Dendritic cell treated with granulocyte-macrophage colony-stimulating factor and Interleukin-4, amounts not matched to agents 40 ng/mL and 50 ng/mL, for 4 days (primary cell): ENCODE measurements at regions of chrX and their contacts with region 1.

Region 1: DNA sequence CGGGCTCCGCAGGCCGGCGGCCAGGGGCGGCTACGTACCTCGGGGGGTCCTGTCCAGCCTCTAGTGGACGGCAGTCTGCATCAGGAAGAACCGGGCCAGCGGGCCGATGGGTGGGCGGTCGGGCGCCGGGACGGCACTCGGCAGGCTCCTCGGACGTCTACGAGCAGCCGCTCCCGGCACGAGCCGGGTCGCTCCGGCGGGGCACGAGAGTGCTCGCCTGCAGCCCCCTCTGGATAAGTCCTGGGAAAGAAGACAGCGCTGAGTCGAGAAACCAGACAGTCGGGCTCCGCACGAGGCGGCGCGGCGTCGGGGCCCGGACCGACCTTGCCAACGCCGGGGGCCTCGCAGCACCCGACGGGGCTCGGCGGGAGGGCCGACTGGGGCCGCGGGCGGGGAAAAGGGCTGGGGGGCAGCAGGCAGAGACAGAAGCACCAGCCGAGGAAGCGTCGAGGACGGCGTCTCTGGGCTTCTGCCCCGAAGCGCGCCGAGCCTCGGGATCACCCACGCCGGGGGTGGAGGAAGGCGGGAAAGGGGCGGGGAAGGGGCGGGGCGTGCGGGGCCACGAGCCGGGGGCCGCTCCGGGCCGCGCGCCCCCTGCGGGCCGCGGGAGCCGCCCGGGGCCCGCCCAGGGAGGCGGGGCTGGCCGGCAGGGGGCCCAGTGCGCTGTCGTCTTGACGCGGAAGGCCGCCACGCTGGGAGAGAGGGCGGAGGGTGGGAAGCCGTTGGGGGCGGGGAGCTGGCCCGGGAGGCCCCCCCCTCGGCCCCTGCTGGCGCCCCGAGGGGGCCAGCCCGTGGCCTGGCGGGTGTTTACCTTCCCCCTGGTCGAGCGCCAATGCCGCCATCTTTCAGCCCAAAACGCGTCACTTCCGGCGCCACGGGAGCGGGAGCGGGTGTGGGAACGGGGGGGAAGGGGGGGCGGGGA is 1.9 kb downstream of the KLHL15 start:
- H3K4me3 Mint-ChIP-seq: peak overlapping the region; percentile 74
- H3K27ac Mint-ChIP-seq: peak overlapping the region; percentile 83
- H3K4me1 Mint-ChIP-seq: peaks cover 8% of the 10 kb centered on the region
- H3K27me3 Mint-ChIP-seq: peaks cover 2% of the 10 kb centered on the region

Region 2: DNA sequence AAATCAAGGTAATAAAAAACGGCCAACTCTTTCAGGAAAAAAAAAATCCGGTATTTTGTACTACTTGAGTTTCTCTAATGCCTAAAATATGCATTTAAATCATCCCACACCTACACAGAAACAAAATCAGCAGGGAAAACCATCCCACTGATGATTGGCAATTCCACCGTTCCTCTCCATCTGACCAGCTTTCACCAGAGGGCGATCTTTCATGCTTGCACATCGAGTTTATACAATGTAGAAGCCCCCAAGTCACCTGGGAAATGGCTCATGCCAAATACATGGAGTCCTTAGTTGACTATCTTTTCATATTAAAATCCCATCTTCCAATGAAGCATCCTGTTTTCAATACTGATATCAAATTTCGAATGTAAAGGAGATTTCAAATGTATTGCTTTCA is 621.2 kb before region 1 on chrX:
- intact Hi-C with region 1: no loop called
- H3K4me3 Mint-ChIP-seq: no peak overlapping the region
- H3K27ac Mint-ChIP-seq: no peak overlapping the region
- H3K4me1 Mint-ChIP-seq: no peaks in the 10 kb centered on the region
- H3K27me3 Mint-ChIP-seq: no peaks in the 10 kb centered on the region

Region 3: DNA sequence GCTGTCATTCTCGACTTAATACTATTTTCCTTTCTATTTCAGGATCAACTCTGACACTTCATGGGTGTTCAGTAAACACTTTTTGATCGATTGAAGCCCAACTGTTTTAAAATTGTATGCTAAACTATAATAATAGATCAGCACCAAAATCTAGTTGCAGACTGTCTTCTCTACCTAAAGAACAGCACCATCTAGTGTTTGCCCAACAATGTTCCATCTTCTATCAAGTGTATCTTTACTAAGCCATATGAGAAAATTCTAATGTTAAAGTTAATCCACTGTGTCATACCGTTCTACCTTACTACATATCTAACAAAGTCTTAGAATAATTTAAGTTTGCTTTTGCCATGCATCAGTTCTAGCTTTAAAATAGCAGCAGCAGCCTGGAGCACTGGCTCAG is 470.8 kb before region 1 on chrX:
- intact Hi-C with region 1: no loop called
- H3K4me3 Mint-ChIP-seq: no peak overlapping the region
- H3K27ac Mint-ChIP-seq: no peak overlapping the region
- H3K4me1 Mint-ChIP-seq: no peaks in the 10 kb centered on the region
- H3K27me3 Mint-ChIP-seq: no peaks in the 10 kb centered on the region

Region 4: GRCh38 chrX:23907498-23908218 is 117.4 kb before region 1 on chrX and contains the starts of genes APOO and CXorf58:
- intact Hi-C with region 1: loop called (anchors 2 kb)
- H3K4me3 Mint-ChIP-seq: peak within 1 kb of the TSS; percentile 73
- H3K27ac Mint-ChIP-seq: peak within 1 kb of the TSS; percentile 80
- H3K4me1 Mint-ChIP-seq: peaks cover 21% of the 10 kb centered on the region
- H3K27me3 Mint-ChIP-seq: no peaks in the 10 kb centered on the region

Region 5: DNA sequence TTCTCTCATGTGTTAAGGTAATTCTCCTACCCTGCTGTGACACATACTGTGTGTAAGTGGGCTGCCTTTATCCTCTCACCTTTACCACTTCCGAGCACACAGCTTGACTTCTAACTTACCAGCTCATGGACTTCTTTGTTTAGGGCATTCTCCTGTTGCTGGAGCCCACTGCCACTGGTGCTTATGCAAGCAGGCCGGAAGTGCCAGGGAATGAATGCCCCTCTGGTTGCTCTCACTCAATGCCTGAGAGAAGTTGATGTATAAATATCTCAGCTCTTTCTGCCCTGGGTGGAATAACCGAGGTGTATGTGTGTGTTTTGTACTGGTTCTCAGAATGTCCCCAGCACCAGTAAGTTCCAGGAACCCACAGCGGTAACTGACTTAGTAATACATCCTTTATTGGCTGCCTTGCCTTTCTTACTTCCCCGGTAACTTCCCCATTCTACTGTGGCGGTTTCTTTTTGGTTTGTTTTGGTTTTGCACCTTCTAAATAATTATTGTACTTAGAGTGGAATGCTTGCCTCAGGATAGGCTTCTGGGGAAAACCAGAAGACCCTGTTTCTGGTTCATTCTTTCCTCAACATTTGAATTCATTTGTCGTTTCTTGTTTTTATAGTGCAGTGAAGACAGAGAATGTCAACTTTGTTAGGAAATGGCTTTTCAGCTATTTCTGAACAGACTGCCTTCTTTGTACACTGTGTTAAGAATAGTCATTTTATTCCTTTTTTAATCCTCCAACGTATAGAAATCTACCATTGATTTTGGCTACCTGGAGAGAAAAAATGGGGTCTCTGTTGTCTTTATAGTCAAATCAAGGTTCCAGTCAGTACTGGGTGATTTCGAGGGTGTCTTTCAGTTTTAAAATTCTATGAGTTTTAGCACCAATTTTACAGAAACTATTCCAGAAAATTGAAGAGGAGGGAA is 71.8 kb before region 1 on chrX:
- intact Hi-C with region 1: loop called (anchors 5 kb)
- H3K4me3 Mint-ChIP-seq: peak overlapping the region; percentile 69
- H3K27ac Mint-ChIP-seq: peak overlapping the region; percentile 87
- H3K4me1 Mint-ChIP-seq: peaks cover 10% of the 10 kb centered on the region
- H3K27me3 Mint-ChIP-seq: no peaks in the 10 kb centered on the region

Region 6: GRCh38 chrX:24054182-24055042 is 29.3 kb after region 1 on chrX and contains the start of gene EIF2S3:
- intact Hi-C with region 1: loop called (anchors 1 kb)
- H3K4me3 Mint-ChIP-seq: peak within 1 kb of the TSS; percentile 87
- H3K27ac Mint-ChIP-seq: peak within 1 kb of the TSS; percentile 99
- H3K4me1 Mint-ChIP-seq: no peaks in the 10 kb centered on the region
- H3K27me3 Mint-ChIP-seq: no peaks in the 10 kb centered on the region

Region 7: DNA sequence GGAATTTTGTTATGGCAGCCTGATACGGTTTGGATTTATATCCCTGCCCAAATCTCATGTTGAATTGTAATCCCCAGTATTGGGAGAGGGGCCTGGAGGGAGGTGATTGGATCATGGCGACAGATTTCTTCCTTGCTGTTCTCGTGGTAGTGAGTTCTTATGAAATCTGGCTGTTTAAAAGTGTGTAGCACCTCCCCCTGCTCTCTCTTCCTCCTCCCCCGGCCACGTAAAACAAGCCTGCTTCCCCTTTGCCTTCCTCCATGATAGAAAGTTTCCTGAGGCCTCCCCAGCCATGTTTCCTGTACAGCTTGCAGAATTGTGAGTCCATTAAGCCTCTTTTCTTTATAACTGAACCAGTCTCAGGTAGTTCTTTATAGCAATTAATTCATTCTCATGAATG is 250.9 kb after region 1 on chrX:
- intact Hi-C with region 1: no loop called
- H3K4me3 Mint-ChIP-seq: no peak overlapping the region
- H3K27ac Mint-ChIP-seq: no peak overlapping the region
- H3K4me1 Mint-ChIP-seq: peaks cover 6% of the 10 kb centered on the region
- H3K27me3 Mint-ChIP-seq: no peaks in the 10 kb centered on the region